Natural killer cell (primary cell): ENCODE measurements at regions of chr12 and their contacts with region 1.

Region 1: GRCh38 chr12:103965590-103966504 is at the start of gene TDG:
- DNase-seq: peak; percentile 92 to 99
- ATAC-seq: peak; percentile 92 to 99 (median 94)
- H3K4me3 ChIP-seq: peak within 1 kb of the TSS; percentile 78
- H3K4me3 Mint-ChIP-seq: peak within 1 kb of the TSS; percentile 99
- H3K27ac ChIP-seq: peak within 1 kb of the TSS; percentile 91
- H3K27ac Mint-ChIP-seq: peak within 1 kb of the TSS; percentile 97 to 98
- H3K4me1 ChIP-seq: peaks cover 12% of the 10 kb centered on the region
- H3K4me1 Mint-ChIP-seq: peaks cover 44 to 49% of the 10 kb centered on the region in 2 donors
- H3K27me3 ChIP-seq: no peaks in the 10 kb centered on the region
- H3K27me3 Mint-ChIP-seq: no peaks in the 10 kb centered on the region
- CTCF ChIP-seq: no peak
- total RNA-seq, gene TDG: 28.2 to 28.7 (median 28.7) TPM

Region 2: DNA sequence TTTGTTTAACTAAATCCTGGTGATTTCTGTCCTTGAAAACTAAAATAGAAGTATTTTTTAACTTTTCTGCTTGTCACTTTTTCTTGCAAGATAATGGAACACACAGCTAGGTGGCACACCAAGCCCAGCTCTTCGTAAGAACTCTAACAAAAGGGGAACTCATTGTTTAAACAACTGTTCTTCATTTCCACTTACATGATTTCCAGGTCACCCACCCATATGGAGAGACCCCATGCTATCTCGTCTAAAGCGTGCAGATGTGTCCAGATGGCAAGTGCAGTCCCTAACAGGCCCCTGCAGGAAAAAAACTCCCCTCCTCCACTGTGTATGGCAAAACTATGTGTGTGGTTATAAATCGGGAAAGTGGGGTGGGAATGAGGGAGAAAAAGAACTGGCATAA is 81.5 kb before region 1 on chr12:
- intact Hi-C with region 1: loop called (anchors 5 kb)
- DNase-seq: peak in 1 of 2 donors; percentile 75
- ATAC-seq: no peak
- H3K4me3 ChIP-seq: no peak overlapping the region
- H3K4me3 Mint-ChIP-seq: no peak overlapping the region
- H3K27ac ChIP-seq: no peak overlapping the region
- H3K27ac Mint-ChIP-seq: no peak overlapping the region
- H3K4me1 ChIP-seq: no peaks in the 10 kb centered on the region
- H3K4me1 Mint-ChIP-seq: peaks cover 0 to 5% of the 10 kb centered on the region in 2 donors
- H3K27me3 ChIP-seq: no peaks in the 10 kb centered on the region
- H3K27me3 Mint-ChIP-seq: no peaks in the 10 kb centered on the region
- CTCF ChIP-seq: no peak

Region 3: GRCh38 chr12:104064031-104064822 is 98.4 kb after region 1 on chr12 and contains the start of gene HCFC2:
- intact Hi-C with region 1: loop called (anchors 2 kb)
- DNase-seq: peak; percentile 86 to 91
- ATAC-seq: peak; percentile 95 to 97 (median 97)
- H3K4me3 ChIP-seq: peak within 1 kb of the TSS; percentile 87
- H3K4me3 Mint-ChIP-seq: peak within 1 kb of the TSS; percentile 92
- H3K27ac ChIP-seq: peak within 1 kb of the TSS; percentile 66
- H3K27ac Mint-ChIP-seq: peak within 1 kb of the TSS; percentile 82 to 93
- H3K4me1 ChIP-seq: peaks cover 14% of the 10 kb centered on the region
- H3K4me1 Mint-ChIP-seq: peaks cover 13 to 22% of the 10 kb centered on the region in 2 donors
- H3K27me3 ChIP-seq: no peaks in the 10 kb centered on the region
- H3K27me3 Mint-ChIP-seq: peaks cover 8 to 9% of the 10 kb centered on the region in 2 donors
- CTCF ChIP-seq: no peak
- total RNA-seq, gene HCFC2: 20.3 to 24.4 (median 23.8) TPM

Region 4: GRCh38 chr12:104234926-104235499 is 269.2 kb after region 1 on chr12:
- intact Hi-C with region 1: no loop called
- DNase-seq: no peak
- ATAC-seq: no peak
- H3K4me3 ChIP-seq: no peak overlapping the region
- H3K4me3 Mint-ChIP-seq: no peak overlapping the region
- H3K27ac ChIP-seq: no peak overlapping the region
- H3K27ac Mint-ChIP-seq: no peak overlapping the region
- H3K4me1 ChIP-seq: no peaks in the 10 kb centered on the region
- H3K4me1 Mint-ChIP-seq: no peaks in the 10 kb centered on the region
- H3K27me3 ChIP-seq: no peaks in the 10 kb centered on the region
- H3K27me3 Mint-ChIP-seq: peaks cover 2 to 9% of the 10 kb centered on the region in 2 donors
- CTCF ChIP-seq: no peak